ENCODE measurements at regions of chr17 and their contacts with region 1.

Region 1: DNA sequence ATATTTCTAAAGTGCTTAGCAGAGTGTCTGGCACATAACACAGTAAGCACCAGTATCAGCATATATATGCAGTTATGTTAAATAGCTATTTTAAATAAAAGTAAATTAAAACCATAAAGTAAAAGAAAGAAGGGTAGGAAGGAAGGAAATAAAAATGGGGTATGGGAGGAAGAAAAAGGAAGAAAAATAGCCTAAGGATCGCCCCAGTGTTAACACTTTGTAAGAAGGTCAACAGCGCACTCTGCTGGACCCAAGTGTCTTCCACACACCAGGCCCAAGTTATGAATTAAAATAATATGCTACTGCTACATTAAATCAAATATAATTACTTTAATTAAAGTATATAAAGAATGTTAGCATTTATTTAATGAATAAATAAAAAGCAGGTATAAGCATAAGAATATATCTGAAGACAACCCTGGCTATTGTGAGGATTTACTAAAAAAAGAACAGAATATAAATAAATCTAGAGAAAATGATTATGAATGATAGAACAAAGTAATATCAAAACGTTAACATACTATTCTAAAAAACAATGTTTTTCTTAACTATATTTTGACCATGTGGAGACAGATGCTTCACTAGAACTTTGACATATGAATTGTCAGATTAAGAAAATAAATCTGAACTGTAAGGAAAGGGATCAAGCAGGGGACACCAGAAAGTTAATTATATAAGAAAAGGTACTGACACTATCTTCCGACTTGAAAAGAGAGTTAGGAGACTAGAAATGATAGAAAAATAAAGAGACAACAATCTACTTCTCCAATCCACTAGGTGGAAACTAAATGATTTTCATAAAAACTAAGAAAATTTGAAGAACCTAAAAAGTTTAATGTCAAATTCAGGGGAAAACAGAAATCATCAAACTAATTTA is 25.9 kb downstream of the BRIP1 start:
- DNase-seq: peak; percentile 72

Region 2: GRCh38 chr17:61635913-61636432 is 201.4 kb before region 1 on chr17:
- in situ Hi-C with region 1: loop called (anchors 25 kb)
- DNase-seq: peak; percentile 64

Region 3: GRCh38 chr17:61955621-61956020 is 118.2 kb after region 1 on chr17:
- in situ Hi-C with region 1: no loop called
- DNase-seq: no peak